MCF 10A (cell line): ENCODE measurements at regions of chr4 and their contacts with region 1.

Region 1: GRCh38 chr4:72505314-72505744 is 63.7 kb downstream of the ADAMTS3 start:
- DNase-seq: peak; percentile 68
- H3K4me3 Mint-ChIP-seq: no peak overlapping the region
- H3K27ac Mint-ChIP-seq: no peak overlapping the region
- H3K4me1 Mint-ChIP-seq: peaks cover 5% of the 10 kb centered on the region
- H3K27me3 Mint-ChIP-seq: no peaks in the 10 kb centered on the region
- CTCF ChIP-seq: peak; percentile 71

Region 2: GRCh38 chr4:72312032-72312650 is 193.2 kb before region 1 on chr4:
- CTCF ChIA-PET with region 1: no interaction called
- POLR2A ChIA-PET with region 1: no interaction called
- intact Hi-C with region 1: no loop called
- DNase-seq: peak; percentile 98
- H3K4me3 Mint-ChIP-seq: peak overlapping the region; percentile 56
- H3K27ac Mint-ChIP-seq: peak overlapping the region; percentile 95
- H3K4me1 Mint-ChIP-seq: peaks cover 26% of the 10 kb centered on the region
- H3K27me3 Mint-ChIP-seq: no peaks in the 10 kb centered on the region
- CTCF ChIP-seq: no peak

Region 3: GRCh38 chr4:72525938-72526337 is 20.6 kb after region 1 on chr4:
- CTCF ChIA-PET with region 1: interaction called, 12 read pairs
- POLR2A ChIA-PET with region 1: no interaction called
- intact Hi-C with region 1: no loop called
- DNase-seq: peak; percentile 68
- H3K4me3 Mint-ChIP-seq: no peak overlapping the region
- H3K27ac Mint-ChIP-seq: no peak overlapping the region
- H3K4me1 Mint-ChIP-seq: peaks cover 17% of the 10 kb centered on the region
- H3K27me3 Mint-ChIP-seq: no peaks in the 10 kb centered on the region
- CTCF ChIP-seq: no peak

Region 4: GRCh38 chr4:72567821-72568675 is 62.7 kb after region 1 on chr4:
- CTCF ChIA-PET with region 1: interaction called, 3 read pairs
- POLR2A ChIA-PET with region 1: interaction called, 3 read pairs
- intact Hi-C with region 1: loop called (anchors 2 kb)
- DNase-seq: peak; percentile 89
- H3K4me3 Mint-ChIP-seq: peak overlapping the region; percentile 76
- H3K27ac Mint-ChIP-seq: peak overlapping the region; percentile 23
- H3K4me1 Mint-ChIP-seq: peaks cover 24% of the 10 kb centered on the region
- H3K27me3 Mint-ChIP-seq: no peaks in the 10 kb centered on the region
- CTCF ChIP-seq: peak; percentile 40

Region 5: DNA sequence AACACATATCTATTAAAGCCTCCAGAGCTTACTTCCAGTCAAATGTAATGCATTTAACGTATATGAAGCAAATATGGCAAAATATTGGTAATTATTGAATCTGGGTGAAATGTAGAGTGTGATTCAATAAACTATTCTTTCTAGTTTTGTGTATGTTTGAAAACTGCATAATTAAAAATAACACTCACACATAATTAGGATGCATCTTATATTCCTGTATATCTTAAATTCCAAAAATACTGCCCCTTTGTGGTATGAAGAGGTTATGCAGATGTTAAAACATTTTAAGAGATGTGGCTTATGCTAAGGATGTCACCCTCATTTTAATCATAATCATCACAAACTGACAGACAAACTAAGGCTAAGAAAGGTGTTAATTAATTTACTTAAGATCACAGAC is 381.3 kb after region 1 on chr4:
- CTCF ChIA-PET with region 1: interaction called, 8 read pairs
- POLR2A ChIA-PET with region 1: no interaction called
- intact Hi-C with region 1: loop called (anchors 1 kb)
- DNase-seq: peak; percentile 32
- H3K4me3 Mint-ChIP-seq: no peak overlapping the region
- H3K27ac Mint-ChIP-seq: no peak overlapping the region
- H3K4me1 Mint-ChIP-seq: no peaks in the 10 kb centered on the region
- H3K27me3 Mint-ChIP-seq: no peaks in the 10 kb centered on the region
- CTCF ChIP-seq: peak; percentile 50

Region 6: GRCh38 chr4:72909461-72909860 is 404.1 kb after region 1 on chr4:
- CTCF ChIA-PET with region 1: interaction called, 8 read pairs
- POLR2A ChIA-PET with region 1: no interaction called
- intact Hi-C with region 1: loop called (anchors 1 kb)
- DNase-seq: peak; percentile 39
- H3K4me3 Mint-ChIP-seq: no peak overlapping the region
- H3K27ac Mint-ChIP-seq: no peak overlapping the region
- H3K4me1 Mint-ChIP-seq: no peaks in the 10 kb centered on the region
- H3K27me3 Mint-ChIP-seq: no peaks in the 10 kb centered on the region
- CTCF ChIP-seq: peak; percentile 13

Region 7: GRCh38 chr4:73019462-73020047 is 514.2 kb after region 1 on chr4:
- CTCF ChIA-PET with region 1: interaction called, 21 read pairs
- POLR2A ChIA-PET with region 1: interaction called, 3 read pairs
- intact Hi-C with region 1: loop called (anchors 1 kb)
- DNase-seq: peak; percentile 66
- H3K4me3 Mint-ChIP-seq: no peak overlapping the region
- H3K27ac Mint-ChIP-seq: no peak overlapping the region
- H3K4me1 Mint-ChIP-seq: no peaks in the 10 kb centered on the region
- H3K27me3 Mint-ChIP-seq: peaks cover 9% of the 10 kb centered on the region
- CTCF ChIP-seq: peak; percentile 62